ENCODE measurements at regions of chr3 and their contacts with region 1.

Region 1: GRCh38 chr3:183122257-183122932 is 23.1 kb upstream of the MCCC1 start:
- DNase-seq: peak; percentile 63
- H3K4me3 ChIP-seq: no peak overlapping the region; a peak in 1 of 4 replicates
- H3K27ac ChIP-seq: peak overlapping the region in 1 of 2 experiments; percentile 14; a peak in 2 of 4 replicates
- H3K4me1 ChIP-seq: peaks cover 0 to 7% of the 10 kb centered on the region in 2 experiments; a peak in 1 of 4 replicates
- H3K27me3 ChIP-seq: peaks cover 3% of the 10 kb centered on the region; the same call in 1 of the 2 replicates
- CTCF ChIP-seq: peak; percentile 97
- EP300 ChIP-seq: no peak
- RAD21 ChIP-seq: peak; percentile 92

Region 2: GRCh38 chr3:183044547-183045229 is 77.7 kb before region 1 on chr3:
- CTCF ChIA-PET with region 1: no interaction called
- POLR2A ChIA-PET with region 1: no interaction called
- DNase-seq: no peak
- H3K4me3 ChIP-seq: no peak overlapping the region
- H3K27ac ChIP-seq: no peak overlapping the region
- H3K4me1 ChIP-seq: no peaks in the 10 kb centered on the region
- H3K27me3 ChIP-seq: no peaks in the 10 kb centered on the region
- CTCF ChIP-seq: no peak
- EP300 ChIP-seq: no peak
- RAD21 ChIP-seq: no peak

Region 3: GRCh38 chr3:183142199-183142598 is 19.8 kb after region 1 on chr3:
- CTCF ChIA-PET with region 1: interaction called, 11 read pairs
- POLR2A ChIA-PET with region 1: no interaction called
- DNase-seq: no peak
- H3K4me3 ChIP-seq: no peak overlapping the region
- H3K27ac ChIP-seq: no peak overlapping the region
- H3K4me1 ChIP-seq: peaks cover 0 to 2% of the 10 kb centered on the region in 2 experiments; a peak in 1 of 4 replicates
- H3K27me3 ChIP-seq: no peaks in the 10 kb centered on the region
- CTCF ChIP-seq: no peak
- EP300 ChIP-seq: no peak
- RAD21 ChIP-seq: no peak

Region 4: GRCh38 chr3:183564046-183564445 is 441.7 kb after region 1 on chr3:
- CTCF ChIA-PET with region 1: no interaction called
- POLR2A ChIA-PET with region 1: no interaction called
- DNase-seq: no peak
- H3K4me3 ChIP-seq: no peak overlapping the region
- H3K27ac ChIP-seq: no peak overlapping the region
- H3K4me1 ChIP-seq: peaks cover 0 to 5% of the 10 kb centered on the region in 2 experiments; a peak in 1 of 4 replicates
- H3K27me3 ChIP-seq: no peaks in the 10 kb centered on the region
- CTCF ChIP-seq: no peak
- EP300 ChIP-seq: no peak
- RAD21 ChIP-seq: no peak

Measured in SK-N-SH (cell line).